Activated naive CD8-positive, alpha-beta T cell treated with anti-CD3 and anti-CD28 coated beads, Interleukin-2, amount 10 ng/mL, durations not matched to agents 7 days and 5 days (primary cell): ENCODE measurements at regions of chr11 and their contacts with region 1.

Region 1: GRCh38 chr11:118051611-118052461 is 25.0 kb upstream of the TMPRSS4 start:
- DNase-seq: peak; percentile 47
- ATAC-seq: peak; percentile 91
- H3K4me3 Mint-ChIP-seq: peak overlapping the region; percentile 78
- H3K27ac Mint-ChIP-seq: peak overlapping the region; percentile 96
- H3K4me1 Mint-ChIP-seq: peaks cover 55% of the 10 kb centered on the region
- H3K27me3 Mint-ChIP-seq: no peaks in the 10 kb centered on the region

Region 2: DNA sequence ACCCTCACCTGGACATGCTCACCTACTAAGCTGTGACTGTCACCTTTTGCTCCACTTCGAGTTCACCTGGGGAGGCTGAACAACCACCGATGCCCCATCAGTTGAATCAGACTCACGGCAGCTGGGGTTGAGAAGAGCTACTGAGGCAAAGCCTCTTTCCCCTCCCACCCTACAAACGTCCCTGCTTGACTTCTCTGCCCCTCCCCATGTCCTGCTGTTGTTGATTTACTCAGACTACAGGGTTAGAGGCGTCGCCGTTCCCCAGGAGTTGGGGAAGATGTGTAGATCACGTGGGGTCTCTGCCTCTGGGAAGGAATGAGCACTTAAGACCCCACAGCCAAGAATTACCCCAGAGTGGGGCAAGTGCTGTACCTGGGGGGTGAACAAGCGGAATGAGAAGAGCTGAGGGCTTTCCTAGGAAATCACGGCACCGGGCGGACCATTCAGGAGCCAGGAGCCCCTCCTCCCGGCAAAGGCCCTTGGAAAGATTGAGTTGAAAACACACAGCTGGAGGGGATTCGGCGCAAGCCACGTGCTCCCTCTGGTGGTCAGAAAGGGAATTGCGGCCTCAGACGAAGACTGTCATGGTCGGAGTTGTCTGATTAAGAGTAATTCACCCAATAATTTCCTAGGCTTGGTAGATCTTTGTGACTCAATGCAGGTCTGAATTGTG is 234.3 kb before region 1 on chr11:
- POLR2A ChIA-PET with region 1: interaction called, 11 read pairs
- DNase-seq: peak; percentile 88
- ATAC-seq: peak; percentile 27
- H3K4me3 Mint-ChIP-seq: peak overlapping the region; percentile 79
- H3K27ac Mint-ChIP-seq: peak overlapping the region; percentile 98
- H3K4me1 Mint-ChIP-seq: peaks cover 57% of the 10 kb centered on the region
- H3K27me3 Mint-ChIP-seq: no peaks in the 10 kb centered on the region

Region 3: DNA sequence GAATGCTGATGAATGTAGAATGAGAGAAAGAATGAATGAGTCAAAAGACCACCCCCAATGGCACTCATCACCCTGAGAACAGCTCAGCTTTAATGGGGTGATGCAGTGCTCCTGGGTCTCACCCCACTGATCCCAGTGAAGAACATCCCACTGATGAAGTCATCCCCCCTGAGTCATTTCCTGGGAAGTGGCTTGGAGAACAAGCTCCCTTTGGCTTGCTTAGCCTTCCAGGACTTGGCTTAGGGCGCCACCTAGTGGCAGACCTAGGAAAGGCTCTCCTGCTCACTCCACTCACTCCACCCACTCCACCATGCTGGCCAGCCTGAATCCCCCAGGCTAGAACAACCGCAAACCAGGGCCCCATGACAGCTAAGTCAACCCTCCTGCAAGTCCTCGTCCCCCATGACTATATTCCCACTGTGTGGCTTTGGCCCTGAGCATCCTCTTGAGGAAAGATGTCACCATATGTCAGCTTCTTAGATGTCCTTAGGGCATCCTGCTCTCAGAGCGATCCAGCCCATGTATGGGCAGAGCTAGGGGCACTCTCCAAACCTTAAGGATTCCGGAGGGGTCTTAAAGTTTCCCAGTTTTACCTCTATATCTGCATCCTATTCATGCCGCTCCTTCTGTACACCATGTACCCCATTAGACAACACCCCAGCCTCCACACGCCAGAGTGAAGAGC is 104.9 kb before region 1 on chr11:
- POLR2A ChIA-PET with region 1: interaction called, 93 read pairs
- DNase-seq: peak; percentile 89
- ATAC-seq: peak; percentile 24
- H3K4me3 Mint-ChIP-seq: peak overlapping the region; percentile 1
- H3K27ac Mint-ChIP-seq: peak overlapping the region; percentile 67
- H3K4me1 Mint-ChIP-seq: peaks cover 78% of the 10 kb centered on the region
- H3K27me3 Mint-ChIP-seq: no peaks in the 10 kb centered on the region

Region 4: GRCh38 chr11:117993988-117994745 is 57.7 kb before region 1 on chr11:
- POLR2A ChIA-PET with region 1: interaction called, 128 read pairs
- DNase-seq: no peak
- ATAC-seq: no peak
- H3K4me3 Mint-ChIP-seq: peak overlapping the region; percentile 56
- H3K27ac Mint-ChIP-seq: peak overlapping the region; percentile 59
- H3K4me1 Mint-ChIP-seq: peaks cover 83% of the 10 kb centered on the region
- H3K27me3 Mint-ChIP-seq: no peaks in the 10 kb centered on the region

Region 5: GRCh38 chr11:118012083-118012669 is 39.7 kb before region 1 on chr11:
- POLR2A ChIA-PET with region 1: interaction called, 34 read pairs
- DNase-seq: peak; percentile 35
- ATAC-seq: no peak
- H3K4me3 Mint-ChIP-seq: peak overlapping the region; percentile 55
- H3K27ac Mint-ChIP-seq: peak overlapping the region; percentile 86
- H3K4me1 Mint-ChIP-seq: peaks cover 87% of the 10 kb centered on the region
- H3K27me3 Mint-ChIP-seq: no peaks in the 10 kb centered on the region